ENCODE measurements at regions of chr2 and their contacts with region 1.

Region 1: GRCh38 chr2:34353509-34354113 is 754.5 kb upstream of the FAM98A start:
- DNase-seq: peak; percentile 25
- ATAC-seq: no peak
- H3K4me3 ChIP-seq: no peak overlapping the region
- H3K27ac ChIP-seq: no peak overlapping the region
- H3K4me1 ChIP-seq: no peaks in the 10 kb centered on the region
- H3K27me3 ChIP-seq: no peaks in the 10 kb centered on the region
- CTCF ChIP-seq: peak; percentile 30; the same call in 1 of the 2 replicates

Region 2: DNA sequence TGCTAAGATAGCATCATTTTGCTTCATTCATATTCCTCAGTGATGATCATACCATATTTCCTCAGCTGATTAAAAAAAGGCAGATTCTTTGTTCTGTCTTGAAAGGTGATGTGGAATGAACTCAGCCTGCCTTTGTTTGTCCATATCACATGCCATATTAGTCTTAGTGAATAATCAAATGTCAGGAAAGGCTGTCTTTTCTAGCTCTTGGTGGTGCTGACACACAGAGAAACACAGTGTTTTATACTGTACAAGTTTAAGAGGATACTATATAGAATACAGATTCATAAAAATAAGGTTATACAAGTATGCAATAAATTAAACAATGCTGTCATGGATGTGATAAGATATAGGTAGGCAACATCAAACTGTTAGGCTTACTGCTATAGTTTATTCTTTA is 657.4 kb before region 1 on chr2:
- CTCF ChIA-PET with region 1: no interaction called
- POLR2A ChIA-PET with region 1: no interaction called
- intact Hi-C with region 1: no loop called
- DNase-seq: no peak
- ATAC-seq: no peak
- H3K4me3 ChIP-seq: no peak overlapping the region
- H3K27ac ChIP-seq: no peak overlapping the region
- H3K4me1 ChIP-seq: no peaks in the 10 kb centered on the region
- H3K27me3 ChIP-seq: peaks cover 6% of the 10 kb centered on the region
- CTCF ChIP-seq: no peak

Region 3: GRCh38 chr2:34096562-34097171 is 256.9 kb before region 1 on chr2:
- CTCF ChIA-PET with region 1: no interaction called
- POLR2A ChIA-PET with region 1: no interaction called
- intact Hi-C with region 1: loop called (anchors 10 kb)
- DNase-seq: peak; percentile 84
- ATAC-seq: peak; percentile 69
- H3K4me3 ChIP-seq: no peak overlapping the region
- H3K27ac ChIP-seq: no peak overlapping the region
- H3K4me1 ChIP-seq: no peaks in the 10 kb centered on the region
- H3K27me3 ChIP-seq: peaks cover 3% of the 10 kb centered on the region; the same call in 1 of the 2 replicates
- CTCF ChIP-seq: peak; percentile 85

Measured in PC-3 (cell line).